MCF 10A (cell line): ENCODE measurements at regions of chr22 and their contacts with region 1.

Region 1: GRCh38 chr22:31561238-31561887 is 65.0 kb downstream of the SFI1 start:
- DNase-seq: peak; percentile 84
- H3K4me3 Mint-ChIP-seq: no peak overlapping the region
- H3K27ac Mint-ChIP-seq: peak overlapping the region; percentile 27
- H3K4me1 Mint-ChIP-seq: peaks cover 5% of the 10 kb centered on the region
- H3K27me3 Mint-ChIP-seq: no peaks in the 10 kb centered on the region
- CTCF ChIP-seq: peak; percentile 73

Region 2: GRCh38 chr22:31544481-31545480 is 16.6 kb before region 1 on chr22:
- CTCF ChIA-PET with region 1: interaction called, 10 read pairs
- POLR2A ChIA-PET with region 1: interaction called, 3 read pairs
- intact Hi-C with region 1: no loop called
- DNase-seq: peak; percentile 47
- H3K4me3 Mint-ChIP-seq: no peak overlapping the region
- H3K27ac Mint-ChIP-seq: no peak overlapping the region
- H3K4me1 Mint-ChIP-seq: no peaks in the 10 kb centered on the region
- H3K27me3 Mint-ChIP-seq: no peaks in the 10 kb centered on the region
- CTCF ChIP-seq: no peak

Region 3: DNA sequence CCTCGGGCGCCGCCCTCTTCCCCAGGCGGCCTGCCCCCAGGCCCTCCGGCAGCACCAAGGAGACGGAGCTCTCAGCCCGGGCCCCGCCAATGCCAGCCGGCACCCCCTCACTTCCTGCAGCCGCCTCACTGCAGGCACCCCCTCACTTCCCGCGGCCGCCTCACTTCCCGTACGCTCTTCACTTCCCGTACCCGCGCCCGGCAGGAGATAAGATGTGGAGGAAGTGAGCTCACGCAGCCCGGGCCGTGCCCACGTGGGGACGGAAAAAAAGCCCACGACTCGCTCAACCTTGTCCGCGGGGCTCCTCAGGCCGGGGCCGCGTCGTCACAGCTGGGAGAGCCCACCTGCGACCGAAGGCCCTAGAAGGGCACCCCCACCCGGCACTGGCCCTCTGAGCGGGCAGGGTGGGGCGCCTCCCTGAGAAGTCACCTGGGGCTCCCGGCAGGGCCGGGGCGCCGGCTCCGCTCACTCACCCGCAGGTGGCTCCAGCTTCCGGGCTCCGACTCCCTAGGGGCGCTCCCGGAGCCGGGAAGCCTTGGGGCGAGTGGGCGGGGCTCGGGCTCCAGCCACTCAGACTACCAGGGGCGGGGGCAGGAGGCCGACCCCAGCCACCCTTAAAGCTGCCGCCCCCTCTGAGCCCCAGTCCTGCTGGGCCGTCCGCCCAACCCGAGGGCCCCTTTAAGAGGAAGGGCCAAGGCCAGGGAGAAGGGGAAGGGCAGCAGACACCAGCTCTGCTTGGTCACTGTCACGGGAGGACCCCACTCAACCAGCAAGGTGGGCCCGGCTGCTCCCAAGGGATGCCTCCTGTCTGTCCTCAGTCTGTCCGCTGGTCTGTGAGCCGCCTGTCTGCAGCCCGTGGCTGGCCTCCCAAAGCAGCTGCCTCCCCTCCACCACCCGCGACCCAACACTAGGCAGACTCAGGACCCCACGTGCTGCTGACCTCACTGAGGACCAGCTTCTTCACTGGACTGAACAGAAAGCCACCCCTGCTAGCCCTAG is 69.3 kb after region 1 on chr22:
- CTCF ChIA-PET with region 1: interaction called, 28 read pairs
- POLR2A ChIA-PET with region 1: interaction called, 8 read pairs
- intact Hi-C with region 1: loop called (anchors 5 kb)
- DNase-seq: peak; percentile 70
- H3K4me3 Mint-ChIP-seq: peak overlapping the region; percentile 75
- H3K27ac Mint-ChIP-seq: no peak overlapping the region
- H3K4me1 Mint-ChIP-seq: peaks cover 19% of the 10 kb centered on the region
- H3K27me3 Mint-ChIP-seq: no peaks in the 10 kb centered on the region
- CTCF ChIP-seq: no peak

Region 4: GRCh38 chr22:31637938-31638618 is 76.7 kb after region 1 on chr22:
- CTCF ChIA-PET with region 1: interaction called, 28 read pairs
- POLR2A ChIA-PET with region 1: no interaction called
- intact Hi-C with region 1: loop called (anchors 5 kb)
- DNase-seq: no peak
- H3K4me3 Mint-ChIP-seq: no peak overlapping the region
- H3K27ac Mint-ChIP-seq: peak overlapping the region; percentile 51
- H3K4me1 Mint-ChIP-seq: peaks cover 22% of the 10 kb centered on the region
- H3K27me3 Mint-ChIP-seq: no peaks in the 10 kb centered on the region
- CTCF ChIP-seq: no peak

Region 5: GRCh38 chr22:31943976-31944699 is 382.8 kb after region 1 on chr22 and contains the start of gene YWHAH:
- CTCF ChIA-PET with region 1: interaction called, 3 read pairs
- POLR2A ChIA-PET with region 1: no interaction called
- intact Hi-C with region 1: loop called (anchors 2 kb)
- DNase-seq: peak; percentile 92
- H3K4me3 Mint-ChIP-seq: no peak within 1 kb of the TSS
- H3K27ac Mint-ChIP-seq: peak within 1 kb of the TSS; percentile 55
- H3K4me1 Mint-ChIP-seq: peaks cover 6% of the 10 kb centered on the region
- H3K27me3 Mint-ChIP-seq: no peaks in the 10 kb centered on the region
- CTCF ChIP-seq: no peak
- total RNA-seq, gene YWHAH: 64.2 and 79.9 TPM in 2 replicates

Region 6: GRCh38 chr22:31970490-31971444 is 409.4 kb after region 1 on chr22:
- CTCF ChIA-PET with region 1: interaction called, 3 read pairs
- POLR2A ChIA-PET with region 1: no interaction called
- intact Hi-C with region 1: loop called (anchors 1 kb)
- DNase-seq: peak; percentile 88
- H3K4me3 Mint-ChIP-seq: peak overlapping the region; percentile 82
- H3K27ac Mint-ChIP-seq: peak overlapping the region; percentile 71
- H3K4me1 Mint-ChIP-seq: peaks cover 6% of the 10 kb centered on the region
- H3K27me3 Mint-ChIP-seq: no peaks in the 10 kb centered on the region
- CTCF ChIP-seq: peak; percentile 94